Activated CD4-positive, alpha-beta T cell treated with anti-CD3 and anti-CD28 coated beads for 36 hours (primary cell): ENCODE measurements at regions of chr6 and their contacts with region 1.

Region 1: DNA sequence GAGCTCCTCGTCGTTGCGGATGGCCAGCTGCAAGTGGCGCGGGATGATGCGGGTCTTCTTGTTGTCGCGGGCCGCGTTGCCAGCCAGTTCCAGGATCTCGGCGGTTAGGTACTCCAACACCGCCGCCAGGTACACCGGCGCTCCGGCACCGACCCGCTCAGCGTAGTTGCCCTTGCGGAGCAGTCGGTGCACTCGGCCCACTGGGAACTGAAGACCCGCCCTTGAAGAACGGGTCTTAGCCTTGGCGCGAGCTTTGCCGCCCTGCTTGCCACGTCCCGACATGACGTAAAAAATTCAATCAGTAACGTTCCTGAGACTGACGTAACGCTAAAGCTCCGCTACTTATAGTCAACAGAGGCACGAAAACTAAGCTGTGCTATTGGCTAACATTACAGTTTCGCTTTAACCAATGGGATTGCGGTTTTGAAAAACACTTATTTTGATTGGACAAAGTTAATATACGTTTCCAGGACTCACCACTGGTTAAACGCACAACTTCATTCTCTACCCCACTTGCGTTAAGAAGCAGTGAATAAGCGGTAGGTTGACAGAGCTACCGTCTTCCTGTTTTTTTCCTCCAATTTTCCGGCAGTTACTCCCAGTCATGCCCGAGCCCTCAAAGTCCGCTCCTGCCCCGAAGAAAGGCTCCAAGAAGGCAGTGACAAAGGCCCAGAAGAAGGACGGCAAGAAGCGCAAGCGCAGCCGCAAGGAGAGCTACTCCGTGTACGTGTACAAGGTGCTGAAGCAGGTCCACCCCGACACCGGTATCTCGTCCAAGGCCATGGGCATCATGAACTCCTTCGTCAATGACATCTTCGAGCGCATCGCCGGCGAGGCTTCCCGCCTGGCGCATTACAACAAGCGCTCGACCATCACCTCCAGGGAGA is 73.9 kb downstream of the OR2B2 start:
- DNase-seq: peak; percentile 89
- ATAC-seq: peak; percentile 74
- H3K4me3 Mint-ChIP-seq: no peak overlapping the region
- H3K27ac Mint-ChIP-seq: no peak overlapping the region
- H3K4me1 Mint-ChIP-seq: peaks cover 23% of the 10 kb centered on the region
- H3K27me3 Mint-ChIP-seq: peaks cover 9% of the 10 kb centered on the region

Region 2: DNA sequence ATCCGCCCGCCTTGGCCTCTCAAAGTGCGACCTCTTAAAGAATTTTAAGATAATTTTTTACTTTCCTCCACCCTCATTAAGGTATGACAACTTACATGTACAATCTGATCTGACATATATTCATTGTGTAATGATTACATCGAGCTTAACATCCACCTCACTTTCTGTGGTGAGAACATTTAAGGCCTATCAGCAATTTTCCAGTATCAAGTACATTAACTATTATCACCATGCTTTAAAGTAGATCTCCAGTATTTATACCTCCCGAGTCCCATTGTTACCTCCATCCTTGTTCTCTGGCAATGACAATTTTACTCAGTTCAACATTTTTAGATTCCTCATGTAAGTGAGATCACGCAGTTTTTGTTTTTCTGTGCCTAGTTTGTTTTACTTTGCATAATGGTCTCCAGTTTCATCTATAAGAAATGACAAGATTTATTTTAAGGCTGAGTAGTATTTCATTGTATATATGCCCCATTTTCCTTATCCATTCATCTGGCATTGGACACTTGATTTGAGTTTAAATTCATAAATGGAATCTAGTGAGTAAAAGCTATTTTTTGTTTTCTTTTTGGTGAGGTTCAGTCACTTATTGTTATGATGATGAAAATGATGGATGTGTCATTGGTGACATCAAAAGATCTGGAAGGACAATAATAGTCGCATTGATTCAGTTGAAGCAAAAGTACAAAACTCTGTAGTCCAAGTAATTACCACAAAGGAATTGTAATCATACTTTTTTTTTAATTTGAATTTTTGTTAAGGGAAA is 13.1 kb before region 1 on chr6:
- CTCF ChIA-PET with region 1: interaction called, 24 read pairs
- POLR2A ChIA-PET with region 1: interaction called, 75 read pairs
- intact Hi-C with region 1: loop called (anchors 1 to 2 kb)
- DNase-seq: no peak
- ATAC-seq: peak; percentile 3
- H3K4me3 Mint-ChIP-seq: peak overlapping the region; percentile 79
- H3K27ac Mint-ChIP-seq: peak overlapping the region; percentile 92
- H3K4me1 Mint-ChIP-seq: peaks cover 20% of the 10 kb centered on the region
- H3K27me3 Mint-ChIP-seq: no peaks in the 10 kb centered on the region

Region 3: DNA sequence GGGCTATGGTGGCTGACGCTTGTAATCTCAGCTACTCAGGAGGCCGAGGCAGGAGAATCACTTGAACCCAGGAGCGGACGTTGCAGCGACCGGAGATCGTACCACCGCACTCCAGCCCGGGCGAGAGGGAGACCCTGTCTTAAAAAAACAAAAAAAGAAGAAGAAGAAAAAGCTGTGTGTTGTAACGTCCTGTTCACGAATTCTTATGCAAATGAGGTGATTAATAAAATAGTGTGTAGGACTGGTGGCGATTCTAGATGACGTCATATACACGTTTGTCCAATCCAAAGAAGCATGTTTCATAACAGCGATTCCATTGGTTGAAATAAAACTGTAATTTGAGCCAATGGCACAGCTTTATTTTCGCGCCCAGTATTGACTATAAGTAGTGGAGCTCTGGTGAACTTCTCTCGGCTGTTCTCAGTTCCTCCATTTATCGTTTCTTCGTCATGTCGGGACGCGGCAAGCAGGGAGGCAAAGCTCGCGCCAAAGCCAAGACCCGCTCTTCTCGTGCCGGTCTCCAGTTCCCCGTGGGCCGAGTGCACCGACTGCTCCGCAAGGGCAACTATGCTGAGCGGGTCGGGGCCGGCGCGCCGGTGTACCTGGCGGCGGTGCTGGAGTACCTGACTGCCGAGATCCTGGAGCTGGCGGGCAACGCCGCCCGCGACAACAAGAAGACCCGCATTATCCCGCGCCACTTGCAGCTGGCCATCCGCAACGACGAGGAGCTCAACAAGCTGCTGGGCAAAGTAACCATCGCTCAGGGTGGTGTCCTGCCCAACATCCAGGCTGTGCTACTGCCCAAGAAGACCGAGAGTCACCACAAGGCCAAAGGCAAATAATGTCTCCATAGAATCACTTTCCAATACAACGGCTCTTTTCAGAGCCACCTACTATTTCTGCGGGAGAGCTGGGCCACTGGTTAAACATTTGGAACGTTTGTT is 26.9 kb after region 1 on chr6:
- CTCF ChIA-PET with region 1: interaction called, 14 read pairs
- POLR2A ChIA-PET with region 1: interaction called, 349 read pairs
- intact Hi-C with region 1: loop called (anchors 1 kb)
- DNase-seq: peak; percentile 86
- ATAC-seq: peak; percentile 57
- H3K4me3 Mint-ChIP-seq: peak overlapping the region; percentile 94
- H3K27ac Mint-ChIP-seq: peak overlapping the region; percentile 99
- H3K4me1 Mint-ChIP-seq: peaks cover 40% of the 10 kb centered on the region
- H3K27me3 Mint-ChIP-seq: no peaks in the 10 kb centered on the region

Region 4: DNA sequence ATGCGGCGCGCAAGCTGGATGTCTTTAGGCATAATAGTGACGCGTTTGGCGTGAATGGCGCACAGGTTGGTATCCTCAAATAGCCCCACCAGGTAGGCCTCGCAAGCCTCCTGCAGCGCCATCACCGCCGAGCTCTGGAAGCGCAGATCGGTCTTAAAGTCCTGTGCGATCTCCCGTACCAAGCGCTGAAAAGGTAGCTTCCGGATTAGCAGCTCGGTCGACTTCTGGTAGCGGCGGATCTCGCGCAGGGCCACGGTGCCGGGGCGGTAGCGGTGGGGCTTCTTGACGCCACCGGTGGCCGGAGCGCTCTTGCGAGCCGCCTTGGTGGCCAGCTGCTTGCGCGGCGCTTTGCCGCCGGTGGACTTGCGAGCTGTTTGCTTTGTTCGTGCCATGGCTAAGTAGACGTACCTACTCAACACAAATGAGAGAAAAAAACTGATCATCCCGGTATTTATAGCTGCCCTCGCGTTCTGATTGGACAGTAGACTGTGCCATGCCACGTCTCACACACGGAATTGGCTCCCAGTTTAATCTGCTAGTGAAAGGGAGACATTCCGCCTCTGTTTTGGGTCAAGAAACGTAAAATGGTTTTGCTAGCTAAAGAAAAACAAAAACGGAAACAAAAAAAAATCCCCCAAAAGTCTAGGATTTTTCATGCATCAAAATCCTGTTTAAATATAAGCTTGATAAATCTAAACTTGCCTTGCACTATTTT is 33.8 kb after region 1 on chr6:
- CTCF ChIA-PET with region 1: interaction called, 10 read pairs
- POLR2A ChIA-PET with region 1: interaction called, 349 read pairs
- intact Hi-C with region 1: no loop called
- DNase-seq: peak; percentile 84
- ATAC-seq: peak; percentile 59
- H3K4me3 Mint-ChIP-seq: peak overlapping the region; percentile 81
- H3K27ac Mint-ChIP-seq: peak overlapping the region; percentile 96
- H3K4me1 Mint-ChIP-seq: peaks cover 40% of the 10 kb centered on the region
- H3K27me3 Mint-ChIP-seq: no peaks in the 10 kb centered on the region